Common myeloid progenitor, CD34-positive (primary cell): ENCODE measurements at regions of chr11 and their contacts with region 1.

Region 1: GRCh38 chr11:131748151-131749050 is 378.0 kb downstream of the NTM start:
- DNase-seq: peak; percentile 49 to 77 (median 71)
- H3K4me3 ChIP-seq: no peak overlapping the region
- H3K27ac ChIP-seq: no peak overlapping the region
- H3K4me1 ChIP-seq: no peaks in the 10 kb centered on the region
- H3K27me3 ChIP-seq: peaks cover 0 to 5% (median 2%) of the 10 kb centered on the region in 5 experiments

Region 2: GRCh38 chr11:131656179-131656838 is 92.1 kb before region 1 on chr11:
- CTCF ChIA-PET with region 1: no interaction called
- POLR2A ChIA-PET with region 1: no interaction called
- DNase-seq: no peak
- H3K4me3 ChIP-seq: no peak overlapping the region
- H3K27ac ChIP-seq: no peak overlapping the region
- H3K4me1 ChIP-seq: peaks cover 0 to 15% (median 11%) of the 10 kb centered on the region in 4 experiments
- H3K27me3 ChIP-seq: peaks cover 0 to 8% (median 3%) of the 10 kb centered on the region in 5 experiments

Region 3: DNA sequence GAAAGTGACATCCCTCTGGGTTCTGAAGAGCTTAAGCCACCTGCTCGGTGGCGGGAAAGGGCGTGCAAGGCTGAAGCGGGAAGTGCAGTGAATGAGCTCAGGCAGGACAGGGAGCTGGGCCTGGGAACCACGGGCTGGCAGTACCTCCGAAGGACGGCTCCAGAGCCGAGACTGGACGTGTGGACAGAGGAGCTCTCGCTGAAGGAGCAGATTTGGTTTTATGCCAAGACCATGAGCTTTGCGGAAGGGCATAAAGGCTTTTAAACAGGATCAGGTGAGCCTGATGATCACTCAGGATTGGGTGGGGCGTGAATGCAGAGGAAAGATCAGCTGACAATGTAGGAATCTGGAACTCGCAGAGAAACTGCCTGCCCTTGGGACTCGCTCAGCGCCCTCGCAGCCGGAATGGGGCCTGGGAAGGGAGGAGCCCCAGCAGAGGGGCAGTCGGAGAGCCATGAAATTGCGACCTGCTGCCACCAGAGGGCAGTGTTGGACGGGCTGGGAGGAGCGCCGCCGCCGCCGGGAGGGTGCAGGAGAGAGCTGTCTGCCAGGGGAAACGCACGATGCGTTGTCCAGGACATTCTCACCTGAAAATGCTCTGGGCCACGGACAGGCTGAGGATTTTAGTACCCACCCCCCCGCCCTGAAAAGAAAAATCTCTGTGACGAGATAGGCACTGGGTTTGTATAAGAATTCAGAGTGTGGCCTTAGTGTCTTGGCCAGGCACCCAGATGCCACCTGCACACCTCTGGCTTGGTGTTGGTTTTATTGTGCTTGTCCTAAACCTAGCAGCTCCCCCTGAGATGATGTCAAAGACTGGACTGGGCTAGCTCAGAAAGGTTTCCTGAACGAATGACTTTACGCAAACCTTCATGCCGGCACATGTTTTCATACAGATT is 53.6 kb before region 1 on chr11:
- CTCF ChIA-PET with region 1: interaction called, 10 read pairs
- POLR2A ChIA-PET with region 1: no interaction called
- DNase-seq: peak; percentile 60 to 77 (median 73)
- H3K4me3 ChIP-seq: peak overlapping the region in 1 of 7 experiments; percentile 46
- H3K27ac ChIP-seq: no peak overlapping the region
- H3K4me1 ChIP-seq: peaks cover 0 to 3% (median 0%) of the 10 kb centered on the region in 4 experiments
- H3K27me3 ChIP-seq: peaks cover 6 to 62% (median 10%) of the 10 kb centered on the region in 5 experiments

Region 4: DNA sequence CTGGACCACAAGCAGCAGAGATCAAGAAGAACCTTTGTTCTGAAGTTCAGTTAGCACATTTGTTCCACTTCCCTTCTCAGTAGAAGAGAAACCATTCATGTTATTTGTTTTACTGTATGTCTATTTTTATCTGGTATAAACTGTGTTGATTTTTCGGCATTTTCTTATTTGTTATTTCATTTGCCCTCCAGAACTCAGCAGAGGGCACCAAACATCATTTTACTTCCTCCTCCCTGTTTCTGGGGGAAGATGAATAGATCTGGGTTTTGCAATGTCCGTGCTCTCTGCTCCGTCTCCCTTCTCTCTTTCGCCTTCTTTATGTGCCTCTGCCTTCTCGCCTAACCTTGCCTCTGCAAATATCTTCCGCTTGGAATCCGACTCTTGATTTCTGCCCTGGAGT is 11.0 kb before region 1 on chr11:
- CTCF ChIA-PET with region 1: interaction called, 11 read pairs
- POLR2A ChIA-PET with region 1: no interaction called
- DNase-seq: peak in 2 of 3 donors; percentile 19 to 29
- H3K4me3 ChIP-seq: no peak overlapping the region
- H3K27ac ChIP-seq: no peak overlapping the region
- H3K4me1 ChIP-seq: no peaks in the 10 kb centered on the region
- H3K27me3 ChIP-seq: peaks cover 0 to 30% (median 6%) of the 10 kb centered on the region in 5 experiments

Region 5: DNA sequence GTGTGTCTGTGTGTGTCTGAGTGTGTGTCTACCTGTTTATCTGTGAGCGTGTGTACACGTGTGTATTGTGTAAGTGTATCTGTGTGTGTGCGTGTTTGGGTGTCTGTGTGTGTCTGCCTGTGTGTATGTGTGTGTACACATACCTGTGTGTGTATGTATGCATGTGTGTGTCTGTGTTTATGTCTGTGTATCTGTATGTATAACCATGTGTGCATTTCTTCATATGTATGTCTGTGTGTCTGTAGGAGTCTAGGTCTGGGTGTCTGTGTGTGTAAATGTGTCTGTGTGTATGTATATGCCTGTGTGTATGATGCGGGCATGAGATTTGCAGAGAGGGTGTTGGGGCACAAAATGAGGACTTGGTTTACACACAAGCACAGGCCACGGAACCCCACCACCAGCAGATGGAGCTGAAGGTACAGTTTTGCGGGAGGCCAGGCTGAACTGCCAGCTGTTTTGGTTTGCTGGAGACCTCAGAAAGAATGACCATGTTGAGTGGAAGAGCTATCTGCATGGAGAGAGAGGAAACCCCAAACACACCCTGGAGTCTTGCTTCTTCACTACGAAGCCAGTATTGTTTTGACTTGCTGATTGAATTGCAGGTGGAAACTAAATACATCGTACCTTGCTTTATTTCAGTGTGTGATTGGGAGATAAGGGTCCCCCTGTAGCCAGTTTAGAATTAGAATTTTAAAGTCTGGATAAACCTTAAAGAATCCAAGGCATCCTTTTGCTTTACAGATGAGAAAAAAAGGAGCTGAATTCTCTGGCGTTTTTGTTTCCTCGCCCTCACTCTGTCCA is 119.3 kb after region 1 on chr11:
- CTCF ChIA-PET with region 1: interaction called, 36 read pairs
- POLR2A ChIA-PET with region 1: no interaction called
- DNase-seq: peak; percentile 48 to 73 (median 71)
- H3K4me3 ChIP-seq: no peak overlapping the region
- H3K27ac ChIP-seq: no peak overlapping the region
- H3K4me1 ChIP-seq: no peaks in the 10 kb centered on the region
- H3K27me3 ChIP-seq: peaks cover 0 to 3% (median 0%) of the 10 kb centered on the region in 5 experiments

Region 6: DNA sequence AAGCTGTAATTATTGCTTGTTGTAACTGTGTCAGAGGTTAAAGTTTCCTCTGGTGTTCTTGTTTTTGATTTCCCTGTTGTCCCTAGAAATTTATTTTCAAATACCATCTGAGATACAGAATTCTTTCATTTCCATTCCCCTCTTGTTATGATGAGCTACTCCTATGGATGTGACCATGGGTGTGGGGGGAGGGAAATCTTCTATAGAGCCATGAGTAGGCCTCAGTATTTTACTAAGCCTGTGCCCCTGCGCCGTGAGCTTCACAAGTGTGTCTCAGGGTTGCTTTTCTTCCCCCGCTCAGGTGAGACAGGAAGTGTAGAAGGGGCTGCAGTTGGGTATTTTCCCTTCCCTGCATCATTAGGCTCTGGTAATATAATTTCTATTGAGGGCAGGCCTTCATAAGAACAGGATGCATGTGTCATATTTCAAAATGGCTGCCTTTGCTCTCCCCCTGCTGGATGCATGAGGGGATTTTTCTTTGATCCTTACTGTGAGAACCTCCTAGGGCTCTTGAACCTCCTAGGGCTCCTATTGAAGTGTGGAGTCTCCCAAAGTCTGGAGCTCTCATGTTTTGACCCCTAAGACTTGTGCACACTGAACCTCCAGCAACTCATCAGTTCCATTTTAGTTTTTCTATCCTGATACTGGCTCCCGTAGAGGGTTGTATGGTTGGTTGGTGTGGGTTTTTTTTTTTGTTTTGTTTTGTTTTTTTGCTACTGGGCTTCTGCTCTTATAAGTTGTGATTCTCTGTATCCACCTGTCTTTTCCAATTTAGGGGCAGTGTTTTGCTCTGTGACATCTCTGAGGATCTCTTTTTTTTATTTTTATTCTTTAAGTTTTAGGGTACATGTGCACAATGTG is 280.2 kb after region 1 on chr11:
- CTCF ChIA-PET with region 1: interaction called, 13 read pairs
- POLR2A ChIA-PET with region 1: no interaction called
- DNase-seq: peak; percentile 31 to 73 (median 70)
- H3K4me3 ChIP-seq: no peak overlapping the region
- H3K27ac ChIP-seq: no peak overlapping the region
- H3K4me1 ChIP-seq: no peaks in the 10 kb centered on the region
- H3K27me3 ChIP-seq: peaks cover 0 to 5% (median 2%) of the 10 kb centered on the region in 5 experiments

Region 7: GRCh38 chr11:132126973-132127899 is 378.8 kb after region 1 on chr11:
- CTCF ChIA-PET with region 1: interaction called, 29 read pairs
- POLR2A ChIA-PET with region 1: no interaction called
- DNase-seq: peak; percentile 22 to 38 (median 38)
- H3K4me3 ChIP-seq: peak overlapping the region in 3 of 7 experiments; percentile 57 to 70 (median 68)
- H3K27ac ChIP-seq: no peak overlapping the region
- H3K4me1 ChIP-seq: peaks cover 0 to 7% (median 2%) of the 10 kb centered on the region in 4 experiments
- H3K27me3 ChIP-seq: peaks cover 0 to 18% (median 10%) of the 10 kb centered on the region in 5 experiments